SK-N-SH (cell line): ENCODE measurements at regions of chr17 and their contacts with region 1.

Region 1: GRCh38 chr17:50297407-50297865 is 23.2 kb downstream of the TMEM92 start:
- DNase-seq: peak; percentile 90
- H3K4me3 ChIP-seq: no peak overlapping the region; a peak in 1 of 4 replicates
- H3K27ac ChIP-seq: no peak overlapping the region
- H3K4me1 ChIP-seq: no peaks in the 10 kb centered on the region
- H3K27me3 ChIP-seq: no peaks in the 10 kb centered on the region
- CTCF ChIP-seq: peak; percentile 99
- EP300 ChIP-seq: no peak
- RAD21 ChIP-seq: peak; percentile 100

Region 2: GRCh38 chr17:50177983-50178834 is 119.2 kb before region 1 on chr17:
- CTCF ChIA-PET with region 1: interaction called, 388 read pairs
- POLR2A ChIA-PET with region 1: no interaction called
- DNase-seq: peak; percentile 93
- H3K4me3 ChIP-seq: peak overlapping the region in 1 of 2 experiments; percentile 15; a peak in 1 of 4 replicates
- H3K27ac ChIP-seq: peak overlapping the region; percentile 94 to 100
- H3K4me1 ChIP-seq: peaks cover 29 to 52% of the 10 kb centered on the region in 2 experiments; a peak in 3 of 4 replicates
- H3K27me3 ChIP-seq: no peaks in the 10 kb centered on the region
- CTCF ChIP-seq: peak; percentile 77
- EP300 ChIP-seq: peak; percentile 27 to 36; a peak in 2 of 4 replicates
- RAD21 ChIP-seq: peak; percentile 53

Region 3: DNA sequence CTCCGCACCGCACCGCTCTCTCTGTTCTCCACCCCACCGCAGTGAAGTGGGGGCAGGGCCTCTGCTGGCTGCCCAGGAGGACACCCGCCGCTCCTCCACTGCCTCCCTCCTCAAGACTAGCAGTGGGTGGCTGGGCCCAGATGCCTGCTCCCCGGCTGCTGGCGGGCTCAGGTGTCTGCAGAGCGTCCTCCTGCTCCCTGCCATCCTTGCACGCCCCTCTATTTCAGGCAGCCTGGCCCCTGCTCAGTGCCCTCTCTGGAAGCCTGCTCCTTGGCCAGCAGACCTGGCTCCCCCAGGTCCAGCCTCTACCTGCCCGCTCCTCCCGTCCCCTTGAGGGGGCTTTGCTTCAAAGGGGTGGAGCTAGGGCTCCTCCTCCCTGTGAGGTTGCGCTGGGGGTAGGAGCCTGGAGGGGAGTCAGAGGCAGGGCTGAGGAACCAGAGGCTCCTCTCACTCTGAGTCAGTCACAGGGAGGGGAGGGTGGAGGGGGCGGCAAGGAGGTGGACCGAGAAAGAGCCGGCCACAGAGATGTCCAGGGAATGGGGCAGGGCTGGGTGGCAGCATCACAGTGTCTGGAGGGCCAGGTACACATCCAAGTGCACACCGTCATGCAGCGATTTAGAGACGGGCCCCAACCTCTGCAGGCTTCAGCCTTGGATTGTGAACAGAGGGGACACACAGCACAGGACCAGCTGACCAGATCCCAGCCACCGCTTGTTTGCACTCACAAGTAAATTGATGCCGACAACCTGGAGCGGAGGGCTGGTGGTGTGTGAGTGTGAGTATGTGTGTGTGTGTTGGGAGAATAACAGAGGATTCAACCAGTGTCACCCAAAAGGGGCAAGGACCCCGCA is 32.9 kb before region 1 on chr17:
- CTCF ChIA-PET with region 1: interaction called, 86 read pairs
- POLR2A ChIA-PET with region 1: no interaction called
- DNase-seq: peak; percentile 67
- H3K4me3 ChIP-seq: no peak overlapping the region
- H3K27ac ChIP-seq: peak overlapping the region; percentile 8 to 15; a peak in 2 of 4 replicates
- H3K4me1 ChIP-seq: peaks cover 49 to 51% of the 10 kb centered on the region in 2 experiments; a peak in 3 of 4 replicates
- H3K27me3 ChIP-seq: no peaks in the 10 kb centered on the region
- CTCF ChIP-seq: no peak
- EP300 ChIP-seq: no peak
- RAD21 ChIP-seq: no peak

Region 4: GRCh38 chr17:50269477-50270434 is 27.7 kb before region 1 on chr17:
- CTCF ChIA-PET with region 1: interaction called, 351 read pairs
- POLR2A ChIA-PET with region 1: no interaction called
- DNase-seq: peak; percentile 87
- H3K4me3 ChIP-seq: no peak overlapping the region
- H3K27ac ChIP-seq: peak overlapping the region in 1 of 2 experiments; percentile 42; a peak in 1 of 4 replicates
- H3K4me1 ChIP-seq: peaks cover 35 to 53% of the 10 kb centered on the region in 2 experiments; a peak in 3 of 4 replicates
- H3K27me3 ChIP-seq: no peaks in the 10 kb centered on the region
- CTCF ChIP-seq: peak; percentile 99
- EP300 ChIP-seq: no peak
- RAD21 ChIP-seq: peak; percentile 97

Region 5: DNA sequence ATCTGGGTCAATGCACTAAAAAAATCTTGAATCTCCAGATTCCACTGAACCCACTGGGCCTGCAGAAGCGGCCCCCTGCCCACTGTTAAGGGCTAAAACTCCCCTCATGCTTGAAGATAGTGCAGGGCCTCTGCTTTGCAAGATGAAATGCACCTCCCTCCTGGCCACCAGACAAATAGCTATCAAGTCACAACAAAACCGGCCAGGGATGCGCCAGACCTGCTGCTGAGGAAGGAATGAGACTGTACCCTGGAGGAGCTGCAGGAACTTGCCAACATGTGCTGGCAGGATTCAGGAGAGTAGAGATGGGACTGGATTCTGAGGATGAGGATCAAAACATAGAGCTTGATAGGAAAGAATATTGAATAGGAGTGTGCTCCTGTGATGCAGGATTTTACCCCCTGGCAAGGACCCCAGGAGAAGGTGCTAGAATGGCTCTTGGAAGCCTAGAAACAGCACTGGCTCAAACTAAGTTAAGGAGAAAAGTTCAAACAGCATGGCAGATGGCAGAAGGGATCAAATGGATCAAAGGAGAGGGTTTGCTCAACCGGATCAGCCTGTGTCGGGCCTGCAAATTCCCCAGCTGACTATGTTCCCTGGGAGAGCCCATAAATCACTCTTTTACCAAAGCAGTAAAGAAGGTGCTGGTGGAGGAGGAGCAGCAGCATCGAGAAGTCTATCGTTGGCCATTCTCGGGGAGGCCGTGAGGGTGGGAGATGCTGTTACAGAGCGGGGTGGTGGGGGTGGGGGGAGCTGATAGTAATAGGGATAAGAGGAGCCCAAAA is 21.3 kb after region 1 on chr17:
- CTCF ChIA-PET with region 1: interaction called, 43 read pairs
- POLR2A ChIA-PET with region 1: no interaction called
- DNase-seq: no peak
- H3K4me3 ChIP-seq: no peak overlapping the region
- H3K27ac ChIP-seq: no peak overlapping the region
- H3K4me1 ChIP-seq: no peaks in the 10 kb centered on the region; a peak in 1 of 4 replicates
- H3K27me3 ChIP-seq: no peaks in the 10 kb centered on the region
- CTCF ChIP-seq: no peak
- EP300 ChIP-seq: no peak
- RAD21 ChIP-seq: no peak

Region 6: GRCh38 chr17:50355506-50356341 is 58.3 kb after region 1 on chr17:
- CTCF ChIA-PET with region 1: no interaction called
- POLR2A ChIA-PET with region 1: no interaction called
- DNase-seq: no peak
- H3K4me3 ChIP-seq: no peak overlapping the region
- H3K27ac ChIP-seq: no peak overlapping the region
- H3K4me1 ChIP-seq: peaks cover 0 to 9% of the 10 kb centered on the region in 2 experiments; a peak in 1 of 4 replicates
- H3K27me3 ChIP-seq: no peaks in the 10 kb centered on the region
- CTCF ChIP-seq: no peak
- EP300 ChIP-seq: no peak
- RAD21 ChIP-seq: no peak

Region 7: GRCh38 chr17:50507871-50508572 is 210.6 kb after region 1 on chr17 and contains the start of gene MYCBPAP:
- CTCF ChIA-PET with region 1: no interaction called
- POLR2A ChIA-PET with region 1: no interaction called
- DNase-seq: peak; percentile 98
- H3K4me3 ChIP-seq: peak within 1 kb of the TSS; percentile 62 to 65
- H3K27ac ChIP-seq: peak within 1 kb of the TSS; percentile 22 to 48; a peak in 3 of 4 replicates
- H3K4me1 ChIP-seq: peaks cover 0 to 14% of the 10 kb centered on the region in 2 experiments; a peak in 1 of 4 replicates
- H3K27me3 ChIP-seq: no peaks in the 10 kb centered on the region
- CTCF ChIP-seq: no peak; the same call in 1 of the 2 replicates
- EP300 ChIP-seq: no peak
- RAD21 ChIP-seq: no peak
- polyA plus RNA-seq, gene MYCBPAP: 2.4 and 4.4 TPM in 2 replicates